ENCODE measurements at regions of chr6 and their contacts with region 1.

Region 1: DNA sequence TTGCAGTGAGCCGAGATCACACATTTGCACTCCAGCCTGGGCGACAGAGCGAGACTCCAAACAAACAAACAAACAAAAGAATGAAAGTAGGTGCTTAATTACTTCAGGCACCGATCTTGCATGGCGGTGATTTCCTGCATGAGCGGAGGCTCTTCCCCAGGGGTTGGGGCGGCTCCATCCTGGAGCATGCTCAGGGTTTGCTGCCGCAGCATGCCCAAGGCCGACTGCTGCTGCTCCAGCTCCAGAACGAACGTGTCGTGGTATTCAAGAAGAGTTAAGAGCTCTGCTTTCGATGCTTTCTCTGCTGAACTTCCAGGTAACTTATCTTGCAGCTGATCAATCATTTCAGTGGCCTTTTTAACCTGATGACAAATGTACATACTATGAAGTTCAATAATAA is 313.8 kb downstream of the SYNE1 start:
- DNase-seq: no peak
- ATAC-seq: no peak
- H3K4me3 ChIP-seq: no peak overlapping the region
- H3K27ac ChIP-seq: no peak overlapping the region
- H3K4me1 ChIP-seq: no peaks in the 10 kb centered on the region; the same call in 1 of the 2 replicates
- H3K27me3 ChIP-seq: no peaks in the 10 kb centered on the region
- CTCF ChIP-seq: no peak
- POLR2A ChIP-seq: no peak
- RAD21 ChIP-seq: no peak

Region 2: DNA sequence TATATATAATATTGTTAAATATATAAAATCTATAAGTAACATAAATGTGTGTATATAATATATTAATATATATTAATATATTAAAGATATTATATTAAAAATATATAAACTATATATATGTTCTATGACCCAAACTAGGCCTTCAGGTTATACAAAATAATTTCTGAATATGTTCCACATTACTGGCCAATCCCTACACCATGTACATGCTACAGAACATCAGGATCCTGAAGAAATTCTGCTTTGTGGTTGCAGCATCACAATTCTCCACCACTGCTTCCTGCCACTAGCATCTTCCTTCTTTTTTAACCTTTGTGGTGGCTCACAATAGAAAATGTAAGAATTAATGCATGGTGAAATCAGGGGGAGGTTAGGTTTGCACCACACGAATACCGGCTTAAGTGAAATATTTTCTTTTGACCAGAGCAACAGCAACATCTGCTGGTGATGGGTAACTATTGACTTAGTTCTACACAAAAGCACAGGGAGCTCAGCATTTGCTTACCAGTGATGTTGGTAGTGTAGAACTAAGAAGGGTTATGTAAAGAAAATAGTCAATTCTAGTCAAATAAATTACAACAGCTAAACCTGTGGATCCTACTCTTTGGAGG is 33.2 kb after region 1 on chr6:
- CTCF ChIA-PET with region 1: no interaction called
- POLR2A ChIA-PET with region 1: no interaction called
- dilution Hi-C with region 1: no loop called
- in situ Hi-C with region 1: no loop called
- intact Hi-C with region 1: loop called (anchors 5 kb)
- DNase-seq: peak; percentile 47
- ATAC-seq: peak; percentile 80
- H3K4me3 ChIP-seq: no peak overlapping the region
- H3K27ac ChIP-seq: no peak overlapping the region
- H3K4me1 ChIP-seq: no peaks in the 10 kb centered on the region
- H3K27me3 ChIP-seq: no peaks in the 10 kb centered on the region
- CTCF ChIP-seq: peak; percentile 41
- POLR2A ChIP-seq: no peak
- RAD21 ChIP-seq: peak; percentile 27

Measured in IMR-90 (cell line).